ENCODE measurements at regions of chr6 and their contacts with region 1.

Region 1: DNA sequence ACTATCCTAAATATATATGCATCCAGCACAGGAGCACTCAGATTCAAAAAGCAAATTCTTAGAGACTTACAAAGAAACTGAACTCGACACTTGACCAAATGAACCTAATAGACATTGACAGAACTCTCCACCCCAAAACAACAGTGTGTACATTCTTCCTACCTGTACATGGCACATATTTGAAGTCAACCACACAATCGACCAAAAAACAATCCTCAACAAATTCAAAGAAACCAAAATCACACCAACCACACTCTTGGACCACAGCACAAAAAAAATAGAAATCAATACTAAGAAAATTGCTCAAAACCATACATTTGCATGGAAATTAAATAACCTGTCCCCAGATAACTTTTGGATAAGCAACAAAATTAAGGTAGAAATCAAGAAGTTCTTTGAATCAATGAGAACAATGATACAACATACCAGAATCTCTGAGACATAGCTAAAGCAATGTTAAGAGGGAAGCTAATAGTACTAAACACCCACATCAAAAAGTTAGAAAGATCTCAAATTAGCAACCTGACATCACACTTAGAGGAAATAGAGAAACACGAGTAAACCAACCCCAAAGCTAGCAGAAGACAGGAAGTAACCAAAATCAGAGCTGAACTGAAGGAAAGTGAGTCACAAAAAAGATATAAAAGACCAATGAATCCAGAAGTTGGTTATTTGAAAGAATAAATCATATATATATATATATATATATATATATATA is 12.5 kb upstream of the TREM1 start:
- DNase-seq: peak in 7 of 9 donors; percentile 60 to 85 (median 81)
- ATAC-seq: peak; percentile 94
- H3K4me3 ChIP-seq: peak overlapping the region; percentile 4
- H3K4me3 Mint-ChIP-seq: peak overlapping the region; percentile 56 to 91 (median 76)
- H3K27ac ChIP-seq: peak overlapping the region; percentile 22
- H3K27ac Mint-ChIP-seq: peak overlapping the region; percentile 80 to 98 (median 88)
- H3K4me1 ChIP-seq: peaks cover 18 to 21% of the 10 kb centered on the region in 2 donors
- H3K4me1 Mint-ChIP-seq: peaks cover 24 to 73% (median 57%) of the 10 kb centered on the region in 7 donors
- H3K27me3 ChIP-seq: no peaks in the 10 kb centered on the region
- H3K27me3 Mint-ChIP-seq: peaks cover 0 to 19% (median 0%) of the 10 kb centered on the region in 5 donors

Region 2: GRCh38 chr6:39835821-39836295 is 1463.1 kb before region 1 on chr6:
- CTCF ChIA-PET with region 1: no interaction called
- POLR2A ChIA-PET with region 1: no interaction called
- intact Hi-C with region 1: no loop called
- DNase-seq: no peak
- ATAC-seq: no peak
- H3K4me3 ChIP-seq: no peak overlapping the region
- H3K4me3 Mint-ChIP-seq: no peak overlapping the region
- H3K27ac ChIP-seq: no peak overlapping the region
- H3K27ac Mint-ChIP-seq: no peak overlapping the region
- H3K4me1 ChIP-seq: no peaks in the 10 kb centered on the region
- H3K4me1 Mint-ChIP-seq: peaks cover 0 to 5% (median 0%) of the 10 kb centered on the region in 7 donors
- H3K27me3 ChIP-seq: no peaks in the 10 kb centered on the region
- H3K27me3 Mint-ChIP-seq: peaks cover 2 to 59% (median 45%) of the 10 kb centered on the region in 5 donors

Region 3: GRCh38 chr6:41200296-41200900 is 98.5 kb before region 1 on chr6:
- CTCF ChIA-PET with region 1: no interaction called
- POLR2A ChIA-PET with region 1: no interaction called
- intact Hi-C with region 1: loop called (anchors 1 to 5 kb)
- DNase-seq: peak; percentile 34 to 87 (median 78)
- ATAC-seq: peak; percentile 79
- H3K4me3 ChIP-seq: peak overlapping the region; percentile 26
- H3K4me3 Mint-ChIP-seq: peak overlapping the region; percentile 76 to 84 (median 82)
- H3K27ac ChIP-seq: peak overlapping the region; percentile 88
- H3K27ac Mint-ChIP-seq: peak overlapping the region; percentile 95 to 100 (median 98)
- H3K4me1 ChIP-seq: peaks cover 47 to 55% of the 10 kb centered on the region in 2 donors
- H3K4me1 Mint-ChIP-seq: peaks cover 52 to 93% (median 83%) of the 10 kb centered on the region in 7 donors
- H3K27me3 ChIP-seq: no peaks in the 10 kb centered on the region
- H3K27me3 Mint-ChIP-seq: no peaks in the 10 kb centered on the region

Region 4: GRCh38 chr6:41392246-41392645 is 93.3 kb after region 1 on chr6:
- CTCF ChIA-PET with region 1: no interaction called
- POLR2A ChIA-PET with region 1: no interaction called
- intact Hi-C with region 1: no loop called
- DNase-seq: no peak
- ATAC-seq: no peak
- H3K4me3 ChIP-seq: no peak overlapping the region
- H3K4me3 Mint-ChIP-seq: no peak overlapping the region
- H3K27ac ChIP-seq: no peak overlapping the region
- H3K27ac Mint-ChIP-seq: no peak overlapping the region
- H3K4me1 ChIP-seq: no peaks in the 10 kb centered on the region
- H3K4me1 Mint-ChIP-seq: no peaks in the 10 kb centered on the region
- H3K27me3 ChIP-seq: no peaks in the 10 kb centered on the region
- H3K27me3 Mint-ChIP-seq: peaks cover 10 to 56% (median 30%) of the 10 kb centered on the region in 5 donors

Measured in naive thymus-derived CD4-positive, alpha-beta T cell (primary cell).